PC-3 (cell line): ENCODE measurements at regions of chr9 and their contacts with region 1.

Region 1: DNA sequence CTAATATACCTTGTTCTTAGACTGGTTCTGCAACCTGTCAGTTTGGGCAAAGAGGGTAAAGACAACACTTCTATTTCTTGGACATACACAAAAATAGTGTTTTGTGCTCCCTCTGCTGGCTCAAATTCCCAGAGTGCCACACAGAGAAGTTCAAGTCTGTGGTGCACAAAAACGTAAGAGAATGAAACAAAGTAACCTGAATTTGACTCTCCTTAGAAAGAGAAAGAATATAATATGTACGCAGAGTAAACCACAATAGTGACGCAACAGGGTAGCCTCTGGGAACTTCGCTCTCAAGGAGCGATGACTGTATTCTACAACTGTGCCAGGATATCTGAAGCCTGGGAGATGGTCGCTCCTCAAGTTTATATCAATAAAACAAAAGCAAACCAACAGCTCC is 18.5 kb downstream of the DDX31 start:
- DNase-seq: peak; percentile 78
- ATAC-seq: peak; percentile 83
- H3K4me3 ChIP-seq: no peak overlapping the region
- H3K27ac ChIP-seq: peak overlapping the region; percentile 81
- H3K4me1 ChIP-seq: peaks cover 41% of the 10 kb centered on the region
- H3K27me3 ChIP-seq: no peaks in the 10 kb centered on the region
- CTCF ChIP-seq: peak; percentile 74

Region 2: GRCh38 chr9:132411091-132411508 is 240.2 kb before region 1 on chr9:
- CTCF ChIA-PET with region 1: no interaction called
- POLR2A ChIA-PET with region 1: no interaction called
- intact Hi-C with region 1: loop called (anchors 5 kb)
- DNase-seq: peak; percentile 73
- ATAC-seq: peak; percentile 38
- H3K4me3 ChIP-seq: peak overlapping the region; percentile 63
- H3K27ac ChIP-seq: no peak overlapping the region
- H3K4me1 ChIP-seq: peaks cover 12% of the 10 kb centered on the region
- H3K27me3 ChIP-seq: peaks cover 34% of the 10 kb centered on the region
- CTCF ChIP-seq: peak; percentile 73

Region 3: DNA sequence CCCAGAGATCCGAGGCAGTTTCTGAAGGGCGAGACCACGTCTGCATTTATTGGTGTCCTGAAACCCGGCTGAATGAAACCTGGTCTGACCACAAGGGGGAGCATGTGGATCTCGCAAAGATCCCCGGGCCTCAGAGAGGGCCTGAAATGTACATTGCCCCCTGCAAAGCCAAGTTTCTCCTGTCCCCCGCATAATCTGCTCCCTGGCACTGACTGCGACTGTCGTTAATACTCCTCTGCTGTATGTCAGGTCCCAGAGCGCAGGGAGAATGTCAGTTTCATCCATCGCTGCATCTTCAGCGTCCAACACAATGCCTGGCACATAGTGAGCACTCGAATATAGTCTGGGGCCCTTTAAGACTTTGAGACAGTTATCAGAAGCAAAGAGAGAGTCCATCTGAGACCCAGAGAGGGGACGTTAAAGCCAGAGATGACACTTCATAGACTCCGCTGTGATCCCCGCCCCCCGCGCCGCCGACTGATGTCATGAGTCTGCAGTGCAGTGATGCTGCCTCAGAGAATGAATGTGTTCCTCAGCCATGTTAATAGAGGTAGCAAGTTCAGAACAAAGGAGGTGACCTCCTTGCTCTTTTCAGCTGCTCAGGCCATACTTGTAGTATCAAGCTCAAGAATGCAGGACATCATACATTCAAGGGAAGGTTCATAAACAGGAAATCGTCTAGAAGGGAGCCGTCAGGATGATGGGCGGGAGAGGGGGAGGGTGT is 143.3 kb before region 1 on chr9:
- CTCF ChIA-PET with region 1: no interaction called
- POLR2A ChIA-PET with region 1: no interaction called
- intact Hi-C with region 1: loop called (anchors 1 kb)
- DNase-seq: peak; percentile 75
- ATAC-seq: peak; percentile 82
- H3K4me3 ChIP-seq: no peak overlapping the region
- H3K27ac ChIP-seq: no peak overlapping the region
- H3K4me1 ChIP-seq: no peaks in the 10 kb centered on the region
- H3K27me3 ChIP-seq: peaks cover 24% of the 10 kb centered on the region
- CTCF ChIP-seq: peak; percentile 81

Region 4: DNA sequence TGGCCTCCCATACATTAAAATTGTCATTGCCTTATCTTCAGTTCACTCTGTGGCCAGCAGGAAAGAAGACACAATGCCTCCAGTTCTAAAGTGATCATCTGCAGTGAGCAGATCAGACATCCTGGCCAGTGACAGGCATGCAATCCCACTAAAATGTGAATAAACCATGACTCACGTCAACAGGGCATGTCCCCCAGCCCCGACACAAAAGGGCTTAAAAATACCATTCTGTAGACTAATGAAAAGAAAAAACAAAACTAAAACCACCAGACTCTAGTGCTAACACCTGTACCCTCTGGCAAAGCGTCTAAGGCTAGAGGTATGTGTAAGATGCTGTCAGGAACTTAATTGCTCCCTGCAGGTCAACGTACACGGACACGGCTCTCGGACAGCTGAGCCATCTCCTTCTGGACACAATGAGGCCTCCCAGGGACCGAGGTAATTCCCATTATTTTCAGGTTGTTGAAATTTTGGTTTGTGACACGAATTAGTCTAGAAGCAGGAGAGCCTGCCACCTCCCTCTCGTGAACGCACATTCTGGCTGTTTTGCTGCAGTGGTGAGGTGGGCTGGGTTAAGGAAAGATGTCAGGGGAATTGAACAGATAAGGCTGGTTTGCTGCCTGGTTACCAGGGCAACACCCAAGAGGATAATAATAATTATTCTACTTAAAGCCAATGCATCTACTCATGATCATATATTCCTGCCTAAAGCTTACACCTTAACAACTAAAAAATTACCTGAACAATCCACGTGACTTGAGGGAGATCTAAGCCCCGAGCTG is 19.8 kb before region 1 on chr9:
- CTCF ChIA-PET with region 1: no interaction called
- POLR2A ChIA-PET with region 1: no interaction called
- intact Hi-C with region 1: loop called (anchors 1 kb)
- DNase-seq: peak; percentile 90
- ATAC-seq: peak; percentile 84
- H3K4me3 ChIP-seq: peak overlapping the region; percentile 15; the same call in 1 of the 2 replicates
- H3K27ac ChIP-seq: peak overlapping the region; percentile 81
- H3K4me1 ChIP-seq: peaks cover 50% of the 10 kb centered on the region
- H3K27me3 ChIP-seq: no peaks in the 10 kb centered on the region
- CTCF ChIP-seq: no peak